ENCODE measurements at regions of chr12 and their contacts with region 1.

Region 1: DNA sequence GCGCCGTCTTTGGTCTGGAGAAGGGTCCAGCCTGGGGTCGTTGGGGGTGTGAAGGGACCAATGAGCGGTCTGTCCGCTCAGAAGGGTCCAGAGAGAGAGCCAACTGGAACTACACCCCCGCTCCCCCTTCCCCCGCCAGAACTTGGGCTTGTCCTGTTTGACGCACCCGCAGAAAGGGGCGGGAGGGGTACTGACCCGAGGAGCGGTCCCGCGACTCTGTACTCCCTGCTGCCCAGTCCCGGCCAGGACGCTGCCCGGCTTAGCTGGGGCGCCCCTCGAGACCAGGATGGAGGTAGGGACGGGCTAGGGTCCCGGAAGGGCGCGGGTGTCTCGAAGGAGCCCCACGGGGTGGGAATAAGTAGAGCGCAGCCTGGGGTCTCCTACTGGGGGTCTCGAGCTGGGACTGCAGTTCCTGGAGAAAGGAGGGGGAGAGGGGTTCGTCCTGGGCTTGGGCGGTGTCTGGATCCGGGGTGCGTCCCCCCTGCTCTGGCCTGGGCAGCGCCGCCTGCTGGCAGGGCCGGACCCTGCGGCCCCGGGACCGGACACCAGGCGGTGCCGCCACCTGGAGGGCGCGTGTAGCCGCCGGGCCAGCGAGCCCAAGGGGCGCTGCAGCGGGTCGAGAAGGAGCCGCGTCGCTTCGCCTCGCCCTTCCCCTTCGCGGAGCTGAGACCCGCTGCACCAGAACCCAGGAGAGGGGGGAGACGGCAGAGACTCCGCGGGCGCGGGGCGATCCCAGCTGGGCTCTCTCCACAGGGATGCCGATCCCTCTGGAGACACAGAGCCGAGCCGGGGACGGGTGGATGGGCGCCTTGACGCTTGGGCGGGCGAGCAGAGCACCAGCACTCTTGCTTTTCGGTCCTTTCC is 3.8 kb upstream of the CACNB3 start:
- DNase-seq: peak; percentile 75
- ATAC-seq: peak; percentile 52
- H3K4me3 ChIP-seq: peak overlapping the region; percentile 55
- H3K27ac ChIP-seq: peak overlapping the region; percentile 97
- H3K4me1 ChIP-seq: peaks cover 39% of the 10 kb centered on the region
- H3K27me3 ChIP-seq: no peaks in the 10 kb centered on the region
- CTCF ChIP-seq: peak; percentile 100
- POLR2A ChIP-seq: 0 out of 2 replicates have a peak, but pooled peaks have one; percentile 22
- RAD21 ChIP-seq: peak; percentile 64

Region 2: DNA sequence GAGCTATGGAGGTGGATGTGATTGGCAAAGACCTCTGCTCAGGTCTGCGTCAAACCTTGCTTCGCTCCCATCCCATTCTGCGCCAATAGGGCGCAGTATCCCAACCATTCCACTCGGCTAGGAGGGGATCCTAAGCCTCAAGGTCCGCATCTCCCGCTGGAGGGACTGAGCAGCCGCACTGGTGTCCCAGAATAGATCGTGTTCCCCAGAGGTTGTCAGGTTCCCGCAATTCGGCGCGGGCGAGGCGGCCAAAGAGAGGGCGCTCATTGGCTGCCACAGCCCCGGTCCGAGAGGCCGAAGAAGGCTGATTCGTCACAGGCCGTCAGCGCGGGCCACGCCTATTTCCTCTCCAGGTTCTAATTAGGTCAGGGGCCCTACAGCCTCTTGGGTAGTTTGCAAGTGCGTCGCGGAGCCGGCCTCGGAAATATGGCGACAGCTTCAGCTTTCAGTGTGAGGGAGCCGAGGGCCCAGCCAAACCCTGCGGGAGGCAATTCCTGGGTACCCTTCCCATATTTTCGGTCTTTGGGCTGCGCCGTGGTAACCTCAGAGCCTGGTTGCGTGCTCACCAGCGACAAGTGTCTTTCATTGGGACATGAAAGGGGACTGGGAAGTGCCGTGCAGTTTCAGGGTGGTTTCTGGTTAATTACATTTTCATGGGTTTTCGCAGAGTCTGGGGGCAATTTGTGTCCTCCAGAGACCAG is 616.4 kb before region 1 on chr12:
- CTCF ChIA-PET with region 1: no interaction called
- POLR2A ChIA-PET with region 1: no interaction called
- dilution Hi-C with region 1: no loop called
- in situ Hi-C with region 1: no loop called
- intact Hi-C with region 1: loop called (anchors 5 kb)
- DNase-seq: peak; percentile 87
- ATAC-seq: peak; percentile 92
- H3K4me3 ChIP-seq: peak overlapping the region; percentile 55
- H3K27ac ChIP-seq: peak overlapping the region; percentile 77
- H3K4me1 ChIP-seq: peaks cover 6% of the 10 kb centered on the region; the same call in 1 of the 2 replicates
- H3K27me3 ChIP-seq: peaks cover 7% of the 10 kb centered on the region
- CTCF ChIP-seq: 0 out of 2 replicates have a peak, but pooled peaks have one; percentile 12
- POLR2A ChIP-seq: peak; percentile 67
- RAD21 ChIP-seq: no peak

Region 3: GRCh38 chr12:48716493-48717251 is 97.8 kb before region 1 on chr12 and contains the start of gene CCNT1:
- CTCF ChIA-PET with region 1: interaction called, 3 read pairs
- POLR2A ChIA-PET with region 1: no interaction called
- dilution Hi-C with region 1: no loop called
- in situ Hi-C with region 1: no loop called
- intact Hi-C with region 1: loop called (anchors 1 kb)
- DNase-seq: peak; percentile 100
- ATAC-seq: peak; percentile 95
- H3K4me3 ChIP-seq: peak within 1 kb of the TSS; percentile 69
- H3K27ac ChIP-seq: peak within 1 kb of the TSS; percentile 85
- H3K4me1 ChIP-seq: peaks cover 3% of the 10 kb centered on the region; the same call in 1 of the 2 replicates
- H3K27me3 ChIP-seq: no peaks in the 10 kb centered on the region
- CTCF ChIP-seq: peak; percentile 20; the same call in 1 of the 2 replicates
- POLR2A ChIP-seq: peak; percentile 94
- RAD21 ChIP-seq: no peak
- total RNA-seq, gene CCNT1: 30.3 and 74.0 TPM in 2 replicates

Region 4: GRCh38 chr12:48758221-48758620 is 56.3 kb before region 1 on chr12:
- CTCF ChIA-PET with region 1: interaction called, 6 read pairs
- POLR2A ChIA-PET with region 1: no interaction called
- dilution Hi-C with region 1: no loop called
- in situ Hi-C with region 1: no loop called
- intact Hi-C with region 1: loop called (anchors 1 kb)
- DNase-seq: no peak
- ATAC-seq: no peak
- H3K4me3 ChIP-seq: no peak overlapping the region
- H3K27ac ChIP-seq: no peak overlapping the region
- H3K4me1 ChIP-seq: no peaks in the 10 kb centered on the region
- H3K27me3 ChIP-seq: no peaks in the 10 kb centered on the region
- CTCF ChIP-seq: no peak
- POLR2A ChIP-seq: no peak
- RAD21 ChIP-seq: no peak

Region 5: GRCh38 chr12:48788854-48789796 is 25.4 kb before region 1 on chr12 and contains the start of gene ADCY6:
- CTCF ChIA-PET with region 1: interaction called, 11 read pairs
- POLR2A ChIA-PET with region 1: interaction called, 3 read pairs
- dilution Hi-C with region 1: no loop called
- in situ Hi-C with region 1: no loop called
- intact Hi-C with region 1: loop called (anchors 2 kb)
- DNase-seq: peak; percentile 70
- ATAC-seq: peak; percentile 90
- H3K4me3 ChIP-seq: peak within 1 kb of the TSS; percentile 86
- H3K27ac ChIP-seq: peak within 1 kb of the TSS; percentile 85
- H3K4me1 ChIP-seq: peaks cover 11% of the 10 kb centered on the region
- H3K27me3 ChIP-seq: no peaks in the 10 kb centered on the region
- CTCF ChIP-seq: no peak
- POLR2A ChIP-seq: no peak
- RAD21 ChIP-seq: no peak
- total RNA-seq, gene ADCY6: 18.1 and 18.5 TPM in 2 replicates